Right cardiac atrium (tissue), 5 donors: ENCODE measurements at regions of chr13 and their contacts with region 1.

Region 1: GRCh38 chr13:44435142-44435982 is 61.7 kb downstream of the SERP2 start:
- DNase-seq: peak; percentile 95 to 97 (median 96)
- ATAC-seq: peak; percentile 84 to 87
- H3K4me3 ChIP-seq: peak overlapping the region; percentile 85
- H3K27ac ChIP-seq: peak overlapping the region; percentile 93
- H3K4me1 ChIP-seq: peaks cover 2% of the 10 kb centered on the region
- H3K27me3 ChIP-seq: no peaks in the 10 kb centered on the region

Region 2: GRCh38 chr13:44050450-44051063 is 384.8 kb before region 1 on chr13:
- intact Hi-C with region 1: loop called (anchors 5 kb)
- DNase-seq: no peak
- ATAC-seq: no peak
- H3K4me3 ChIP-seq: no peak overlapping the region
- H3K27ac ChIP-seq: no peak overlapping the region
- H3K4me1 ChIP-seq: no peaks in the 10 kb centered on the region
- H3K27me3 ChIP-seq: no peaks in the 10 kb centered on the region

Region 3: DNA sequence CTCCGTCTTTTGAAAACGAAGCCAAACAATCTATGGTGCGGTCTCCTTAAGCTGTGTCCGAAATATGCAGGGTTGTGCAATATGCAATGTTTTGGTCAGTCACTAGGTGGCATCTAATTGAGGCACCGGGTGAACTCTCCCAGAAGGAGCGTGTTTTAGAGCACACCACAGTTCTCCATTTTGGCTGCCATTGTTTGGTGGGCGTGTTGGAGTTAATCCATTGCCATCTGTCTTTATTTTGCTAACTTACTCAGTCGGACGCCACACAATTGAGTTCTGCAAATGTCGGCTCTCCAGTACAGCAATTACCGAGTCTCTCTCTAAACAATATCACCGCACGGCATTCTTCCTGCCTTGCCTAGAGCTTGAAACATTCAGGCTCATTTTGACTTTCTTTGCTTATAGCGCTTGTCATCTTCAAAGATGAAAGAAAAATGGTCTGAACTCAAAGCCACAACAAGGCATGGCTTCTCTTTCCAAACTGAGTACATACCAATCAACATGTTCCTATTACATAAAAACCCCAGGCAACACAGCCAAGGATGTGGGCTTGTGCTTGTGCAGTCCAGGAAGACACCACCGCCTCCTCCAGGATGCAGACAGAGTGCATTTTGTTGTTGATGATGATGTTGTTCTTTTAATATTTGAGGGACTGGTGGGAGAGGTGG is 243.7 kb before region 1 on chr13:
- intact Hi-C with region 1: loop called in 3 of 4 experiments (anchors 5 to 10 kb)
- DNase-seq: peak in 2 of 3 donors; percentile 29 to 69
- ATAC-seq: peak; percentile 93 to 96
- H3K4me3 ChIP-seq: no peak overlapping the region
- H3K27ac ChIP-seq: no peak overlapping the region
- H3K4me1 ChIP-seq: no peaks in the 10 kb centered on the region
- H3K27me3 ChIP-seq: no peaks in the 10 kb centered on the region

Region 4: DNA sequence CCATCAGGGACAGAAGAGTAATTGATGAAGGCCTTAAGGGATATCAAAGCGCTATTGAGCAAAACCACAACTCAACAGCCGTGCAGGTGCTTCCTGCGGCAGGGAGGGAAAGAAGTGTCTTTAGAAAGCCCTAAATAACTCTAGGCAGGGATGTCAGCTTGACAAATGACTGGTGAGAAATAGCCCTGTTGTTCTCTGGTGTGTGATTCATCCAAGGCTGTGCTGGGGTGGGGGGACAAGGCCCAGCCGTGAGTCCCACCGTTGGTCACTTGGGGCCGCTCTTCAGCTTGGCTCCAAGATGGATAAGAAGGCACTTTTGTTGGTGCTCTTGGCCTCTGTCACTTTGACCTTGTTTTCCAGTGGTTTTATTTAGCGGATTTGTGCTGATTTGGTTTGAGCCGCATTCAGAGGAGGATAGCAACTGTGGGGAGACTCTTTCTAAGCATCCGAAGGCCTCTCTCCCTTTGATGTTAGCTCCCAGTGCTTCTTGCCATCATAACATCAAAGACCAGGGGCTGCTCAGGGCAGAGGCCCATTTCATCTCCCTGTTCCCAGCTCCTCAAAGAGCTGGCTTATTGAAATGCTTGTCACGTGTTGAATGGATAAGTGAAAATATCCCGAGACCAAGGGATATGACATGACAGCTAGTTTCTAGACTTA is 192.0 kb before region 1 on chr13:
- intact Hi-C with region 1: loop called in 2 of 4 experiments (anchors 5 to 10 kb)
- DNase-seq: no peak
- ATAC-seq: peak; percentile 36 to 41
- H3K4me3 ChIP-seq: no peak overlapping the region
- H3K27ac ChIP-seq: no peak overlapping the region
- H3K4me1 ChIP-seq: no peaks in the 10 kb centered on the region
- H3K27me3 ChIP-seq: no peaks in the 10 kb centered on the region

Region 5: DNA sequence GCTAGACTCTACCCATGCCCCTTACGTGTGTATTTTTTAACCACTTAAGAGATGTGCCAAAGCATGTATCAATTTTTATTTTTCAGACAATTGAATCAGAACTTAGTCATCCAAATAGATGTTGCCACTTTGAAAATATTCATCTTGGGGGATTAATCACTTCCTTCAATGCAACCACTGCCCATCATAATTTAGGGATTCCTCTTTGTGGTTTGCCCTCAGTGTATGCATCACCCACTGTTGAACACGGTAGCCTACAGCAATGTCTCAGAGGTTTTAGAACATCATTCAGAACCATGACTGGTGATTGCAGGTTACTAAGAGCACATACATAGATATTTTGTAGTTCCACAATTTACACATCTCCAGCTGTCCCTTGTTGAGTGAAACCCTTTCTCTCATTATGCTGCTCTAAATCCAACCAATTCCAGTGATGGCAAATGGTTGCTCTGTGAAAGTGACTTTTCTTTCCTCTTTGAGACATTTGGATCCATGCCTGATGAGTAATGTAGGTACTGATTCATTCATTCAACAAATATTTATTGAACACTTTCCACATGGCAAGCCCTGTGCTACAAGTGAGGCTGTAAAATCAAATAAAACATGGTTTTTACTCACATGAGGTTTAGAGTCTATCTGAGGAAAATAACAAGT is 122.3 kb before region 1 on chr13:
- intact Hi-C with region 1: loop called in 2 of 4 experiments (anchors 5 to 10 kb)
- DNase-seq: no peak
- ATAC-seq: no peak
- H3K4me3 ChIP-seq: no peak overlapping the region
- H3K27ac ChIP-seq: no peak overlapping the region
- H3K4me1 ChIP-seq: peaks cover 6% of the 10 kb centered on the region
- H3K27me3 ChIP-seq: no peaks in the 10 kb centered on the region

Region 6: GRCh38 chr13:45584816-45585215 is 1149.5 kb after region 1 on chr13:
- intact Hi-C with region 1: no loop called
- DNase-seq: no peak
- ATAC-seq: no peak
- H3K4me3 ChIP-seq: no peak overlapping the region
- H3K27ac ChIP-seq: no peak overlapping the region
- H3K4me1 ChIP-seq: no peaks in the 10 kb centered on the region
- H3K27me3 ChIP-seq: no peaks in the 10 kb centered on the region